ENCODE measurements at regions of chr11 and their contacts with region 1.

Region 1: GRCh38 chr11:15819679-15820286 is 536.6 kb downstream of the SOX6 start:
- DNase-seq: peak; percentile 86
- H3K4me3 Mint-ChIP-seq: no peak overlapping the region
- H3K27ac Mint-ChIP-seq: no peak overlapping the region
- H3K4me1 Mint-ChIP-seq: peaks cover 37% of the 10 kb centered on the region
- H3K27me3 Mint-ChIP-seq: no peaks in the 10 kb centered on the region
- CTCF ChIP-seq: peak; percentile 82

Region 2: GRCh38 chr11:15483205-15483604 is 336.6 kb before region 1 on chr11:
- CTCF ChIA-PET with region 1: no interaction called
- intact Hi-C with region 1: no loop called
- DNase-seq: no peak
- H3K4me3 Mint-ChIP-seq: no peak overlapping the region
- H3K27ac Mint-ChIP-seq: no peak overlapping the region
- H3K4me1 Mint-ChIP-seq: no peaks in the 10 kb centered on the region
- H3K27me3 Mint-ChIP-seq: peaks cover 34% of the 10 kb centered on the region
- CTCF ChIP-seq: no peak

Region 3: GRCh38 chr11:15650105-15650938 is 169.5 kb before region 1 on chr11:
- CTCF ChIA-PET with region 1: interaction called, 3 read pairs
- intact Hi-C with region 1: loop called (anchors 10 kb)
- DNase-seq: peak; percentile 97
- H3K4me3 Mint-ChIP-seq: peak overlapping the region; percentile 45
- H3K27ac Mint-ChIP-seq: no peak overlapping the region
- H3K4me1 Mint-ChIP-seq: peaks cover 30% of the 10 kb centered on the region
- H3K27me3 Mint-ChIP-seq: no peaks in the 10 kb centered on the region
- CTCF ChIP-seq: peak; percentile 95

Region 4: GRCh38 chr11:15688351-15688792 is 131.4 kb before region 1 on chr11:
- CTCF ChIA-PET with region 1: no interaction called
- intact Hi-C with region 1: loop called (anchors 10 kb)
- DNase-seq: peak; percentile 56
- H3K4me3 Mint-ChIP-seq: no peak overlapping the region
- H3K27ac Mint-ChIP-seq: peak overlapping the region; percentile 19
- H3K4me1 Mint-ChIP-seq: peaks cover 33% of the 10 kb centered on the region
- H3K27me3 Mint-ChIP-seq: no peaks in the 10 kb centered on the region
- CTCF ChIP-seq: no peak

Region 5: DNA sequence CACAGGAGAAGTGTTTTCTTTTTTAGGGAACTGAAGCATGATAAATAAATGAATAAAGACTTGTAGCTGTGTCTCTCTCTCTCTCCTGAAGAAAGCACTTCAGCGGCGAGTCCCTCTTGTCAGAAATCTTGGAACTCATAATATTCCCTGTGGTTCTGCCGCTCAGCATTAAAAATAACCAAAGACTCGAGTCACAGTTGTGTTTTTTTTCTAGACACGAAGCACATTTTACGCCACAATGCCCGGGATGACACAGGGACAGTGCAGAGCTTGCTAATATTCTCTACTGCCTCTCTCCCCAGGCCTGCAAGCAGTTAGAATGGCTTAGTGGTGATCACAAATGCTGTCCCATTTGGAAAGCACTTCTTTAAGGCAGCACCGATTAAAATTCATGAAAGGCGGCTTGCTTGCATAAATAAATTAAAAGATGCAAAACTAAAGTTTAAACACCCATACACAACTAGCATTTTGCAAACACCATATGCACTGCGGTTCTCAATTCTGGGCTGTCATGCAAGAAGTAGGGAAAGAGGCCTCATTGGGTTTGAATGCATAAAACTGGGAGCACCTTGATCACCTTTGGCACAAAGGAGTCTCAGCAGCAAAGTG is 60.8 kb before region 1 on chr11:
- CTCF ChIA-PET with region 1: no interaction called
- intact Hi-C with region 1: no loop called
- DNase-seq: no peak
- H3K4me3 Mint-ChIP-seq: no peak overlapping the region
- H3K27ac Mint-ChIP-seq: no peak overlapping the region
- H3K4me1 Mint-ChIP-seq: peaks cover 27% of the 10 kb centered on the region
- H3K27me3 Mint-ChIP-seq: no peaks in the 10 kb centered on the region
- CTCF ChIP-seq: no peak

Region 6: DNA sequence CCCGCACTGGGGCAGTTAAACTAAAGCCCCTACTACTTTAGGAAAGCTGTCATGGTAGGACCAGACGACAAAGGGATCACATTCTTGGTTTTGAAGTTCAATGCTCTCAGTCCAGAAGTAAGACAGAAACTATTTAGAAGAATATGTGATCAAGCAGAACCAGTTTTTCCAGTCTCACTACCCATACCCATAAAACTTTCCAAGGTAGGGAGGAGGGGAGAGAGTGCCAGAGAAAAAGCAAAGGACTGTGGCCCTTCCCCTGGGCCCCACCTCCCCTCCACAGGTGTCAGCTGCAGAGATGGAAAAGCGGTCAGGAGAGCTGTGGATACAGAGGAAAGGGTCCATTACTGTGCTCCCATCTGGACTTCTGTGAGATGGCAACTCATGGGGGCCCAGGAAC is 50.6 kb before region 1 on chr11:
- CTCF ChIA-PET with region 1: no interaction called
- intact Hi-C with region 1: loop called (anchors 2 kb)
- DNase-seq: peak; percentile 54
- H3K4me3 Mint-ChIP-seq: peak overlapping the region; percentile 31
- H3K27ac Mint-ChIP-seq: peak overlapping the region; percentile 73
- H3K4me1 Mint-ChIP-seq: peaks cover 55% of the 10 kb centered on the region
- H3K27me3 Mint-ChIP-seq: no peaks in the 10 kb centered on the region
- CTCF ChIP-seq: no peak

Region 7: GRCh38 chr11:16613512-16614381 is 794.0 kb after region 1 on chr11:
- CTCF ChIA-PET with region 1: interaction called, 6 read pairs
- intact Hi-C with region 1: loop called (anchors 5 kb)
- DNase-seq: peak; percentile 89
- H3K4me3 Mint-ChIP-seq: peak overlapping the region; percentile 86
- H3K27ac Mint-ChIP-seq: no peak overlapping the region
- H3K4me1 Mint-ChIP-seq: peaks cover 12% of the 10 kb centered on the region
- H3K27me3 Mint-ChIP-seq: peaks cover 28% of the 10 kb centered on the region
- CTCF ChIP-seq: peak; percentile 80

Measured in Calu3 (cell line).